ENCODE measurements at regions of chr6 and their contacts with region 1.

Region 1: DNA sequence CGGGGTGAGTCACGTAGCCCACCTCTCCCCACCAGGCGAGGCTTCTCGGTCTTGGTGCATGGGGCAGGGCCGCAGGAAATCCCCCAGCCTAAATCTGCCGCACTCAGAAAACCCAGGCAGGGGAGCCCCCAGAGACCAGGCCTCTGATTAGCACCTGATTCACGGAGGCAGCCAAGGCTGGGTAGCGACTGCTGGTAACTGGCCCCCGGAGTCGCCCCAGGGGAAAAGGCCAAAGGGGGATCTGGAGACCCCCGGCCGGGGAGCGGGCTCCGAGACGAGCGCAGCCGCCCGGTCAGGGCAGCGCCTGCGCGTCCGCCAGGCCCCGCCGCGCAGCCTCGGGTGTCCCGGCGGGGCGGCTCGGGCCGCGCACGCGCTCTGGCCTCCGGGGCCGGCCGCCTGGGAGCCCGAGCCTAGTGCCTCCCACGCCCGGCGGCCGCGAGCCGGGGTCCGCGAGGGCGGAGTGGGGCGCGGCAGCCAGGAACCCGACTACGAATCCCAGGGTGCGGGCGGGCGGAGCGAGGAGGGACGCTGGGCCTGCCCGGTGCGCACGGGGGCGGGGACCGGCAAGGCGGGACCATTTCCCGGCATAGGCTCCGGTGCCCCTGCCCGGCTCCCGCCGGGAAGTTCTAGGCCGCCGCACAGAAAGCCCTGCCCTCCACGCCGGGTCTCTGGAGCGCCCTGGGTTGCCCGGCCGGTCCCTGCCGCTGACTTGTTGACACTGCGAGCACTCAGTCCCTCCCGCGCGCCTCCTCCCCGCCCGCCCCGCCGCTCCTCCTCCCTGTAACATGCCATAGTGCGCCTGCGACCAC is at the start of gene DUSP22:
- DNase-seq: peak; percentile 93
- ATAC-seq: peak; percentile 70
- H3K4me3 Mint-ChIP-seq: peak within 1 kb of the TSS; percentile 81
- H3K27ac Mint-ChIP-seq: peak within 1 kb of the TSS; percentile 93
- H3K4me1 Mint-ChIP-seq: peaks cover 58% of the 10 kb centered on the region
- H3K27me3 Mint-ChIP-seq: no peaks in the 10 kb centered on the region
- total RNA-seq, gene DUSP22: 33.2 to 33.7 TPM

Region 2: GRCh38 chr6:227074-227782 is 64.7 kb before region 1 on chr6:
- CTCF ChIA-PET with region 1: interaction called, 4 read pairs
- POLR2A ChIA-PET with region 1: interaction called, 7 read pairs
- intact Hi-C with region 1: loop called (anchors 1 to 2 kb)
- DNase-seq: peak; percentile 61
- ATAC-seq: no peak
- H3K4me3 Mint-ChIP-seq: no peak overlapping the region
- H3K27ac Mint-ChIP-seq: peak overlapping the region; percentile 52
- H3K4me1 Mint-ChIP-seq: peaks cover 70% of the 10 kb centered on the region
- H3K27me3 Mint-ChIP-seq: peaks cover 2% of the 10 kb centered on the region

Region 3: DNA sequence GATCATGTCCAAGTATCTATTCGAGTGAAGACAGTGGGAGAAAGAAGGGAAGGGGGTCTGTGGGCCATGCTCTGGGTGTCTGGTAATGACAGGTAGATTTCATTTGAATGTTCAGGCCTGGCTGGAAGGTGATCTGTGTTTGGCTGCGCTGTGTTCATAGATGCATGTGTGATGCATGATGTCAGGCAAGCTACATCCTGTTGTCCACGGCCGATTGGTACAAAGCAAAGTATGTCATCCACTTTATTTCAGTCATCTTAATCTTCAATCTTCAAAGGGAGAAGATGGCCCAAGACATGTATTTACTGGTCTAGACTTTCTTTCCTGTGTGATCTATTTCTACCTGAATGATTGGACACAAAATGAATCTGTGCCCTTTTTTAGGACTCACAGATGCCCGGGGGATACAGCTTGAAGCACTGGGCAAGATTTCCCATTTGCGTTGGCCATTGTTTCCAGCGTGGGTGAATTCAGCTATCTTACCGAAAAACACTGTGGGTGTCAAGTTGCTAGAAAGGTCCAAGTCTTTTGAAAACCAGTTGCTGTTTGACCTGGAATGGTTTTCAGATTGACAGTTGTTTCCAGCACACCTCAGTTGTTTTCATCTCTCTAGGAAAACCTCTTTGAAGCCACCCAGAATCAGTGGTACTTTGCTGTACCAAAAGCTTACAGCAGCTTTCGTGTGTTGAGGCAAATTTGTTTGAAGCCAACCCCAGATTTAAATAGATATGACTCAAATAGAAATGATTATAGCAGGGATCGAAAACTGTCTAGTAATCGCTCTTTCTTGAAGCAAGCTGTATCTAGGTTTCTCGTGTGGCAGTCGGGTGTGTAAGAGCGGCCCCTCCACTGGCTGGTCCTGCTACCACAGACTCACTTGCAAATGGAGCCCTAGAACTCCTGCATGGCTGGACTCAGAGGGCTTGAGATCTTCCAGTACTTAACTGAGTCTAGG is 27.6 kb after region 1 on chr6:
- CTCF ChIA-PET with region 1: interaction called, 3 read pairs
- POLR2A ChIA-PET with region 1: no interaction called
- intact Hi-C with region 1: loop called (anchors 1 to 2 kb)
- DNase-seq: peak; percentile 45
- ATAC-seq: peak; percentile 77
- H3K4me3 Mint-ChIP-seq: no peak overlapping the region
- H3K27ac Mint-ChIP-seq: peak overlapping the region; percentile 28
- H3K4me1 Mint-ChIP-seq: peaks cover 24% of the 10 kb centered on the region
- H3K27me3 Mint-ChIP-seq: no peaks in the 10 kb centered on the region

Region 4: GRCh38 chr6:484086-484745 is 192.3 kb after region 1 on chr6:
- CTCF ChIA-PET with region 1: interaction called, 3 read pairs
- POLR2A ChIA-PET with region 1: no interaction called
- intact Hi-C with region 1: loop called in 1 of 2 experiments (anchors 2 kb)
- DNase-seq: peak; percentile 73
- ATAC-seq: peak; percentile 92
- H3K4me3 Mint-ChIP-seq: peak overlapping the region; percentile 58
- H3K27ac Mint-ChIP-seq: peak overlapping the region; percentile 100
- H3K4me1 Mint-ChIP-seq: peaks cover 88% of the 10 kb centered on the region
- H3K27me3 Mint-ChIP-seq: no peaks in the 10 kb centered on the region

Region 5: GRCh38 chr6:540490-540889 is 248.6 kb after region 1 on chr6:
- CTCF ChIA-PET with region 1: no interaction called
- POLR2A ChIA-PET with region 1: no interaction called
- intact Hi-C with region 1: no loop called
- DNase-seq: no peak
- ATAC-seq: no peak
- H3K4me3 Mint-ChIP-seq: no peak overlapping the region
- H3K27ac Mint-ChIP-seq: no peak overlapping the region
- H3K4me1 Mint-ChIP-seq: peaks cover 11% of the 10 kb centered on the region
- H3K27me3 Mint-ChIP-seq: no peaks in the 10 kb centered on the region

Region 6: GRCh38 chr6:558089-558488 is 266.2 kb after region 1 on chr6:
- CTCF ChIA-PET with region 1: no interaction called
- POLR2A ChIA-PET with region 1: no interaction called
- intact Hi-C with region 1: loop called in 1 of 2 experiments (anchors 2 kb)
- DNase-seq: no peak
- ATAC-seq: no peak
- H3K4me3 Mint-ChIP-seq: peak overlapping the region; percentile 15
- H3K27ac Mint-ChIP-seq: peak overlapping the region; percentile 90
- H3K4me1 Mint-ChIP-seq: peaks cover 63% of the 10 kb centered on the region
- H3K27me3 Mint-ChIP-seq: no peaks in the 10 kb centered on the region

Measured in activated CD4-positive, alpha-beta T cell treated with anti-CD3 and anti-CD28 coated beads for 36 hours (primary cell).